Activated B cell treated with CpG ODN at 0.5 μM for 24 hours (primary cell): ENCODE measurements at regions of chr5 and their contacts with region 1.

Region 1: GRCh38 chr5:109688971-109689739 is 572 bp upstream of the MAN2A1 start:
- DNase-seq: peak; percentile 83
- ATAC-seq: peak; percentile 82
- H3K4me3 Mint-ChIP-seq: peak overlapping the region; percentile 88
- H3K27ac Mint-ChIP-seq: peak overlapping the region; percentile 96
- H3K4me1 Mint-ChIP-seq: peaks cover 37% of the 10 kb centered on the region
- H3K27me3 Mint-ChIP-seq: peaks cover 4% of the 10 kb centered on the region
- CTCF ChIP-seq: no peak

Region 2: DNA sequence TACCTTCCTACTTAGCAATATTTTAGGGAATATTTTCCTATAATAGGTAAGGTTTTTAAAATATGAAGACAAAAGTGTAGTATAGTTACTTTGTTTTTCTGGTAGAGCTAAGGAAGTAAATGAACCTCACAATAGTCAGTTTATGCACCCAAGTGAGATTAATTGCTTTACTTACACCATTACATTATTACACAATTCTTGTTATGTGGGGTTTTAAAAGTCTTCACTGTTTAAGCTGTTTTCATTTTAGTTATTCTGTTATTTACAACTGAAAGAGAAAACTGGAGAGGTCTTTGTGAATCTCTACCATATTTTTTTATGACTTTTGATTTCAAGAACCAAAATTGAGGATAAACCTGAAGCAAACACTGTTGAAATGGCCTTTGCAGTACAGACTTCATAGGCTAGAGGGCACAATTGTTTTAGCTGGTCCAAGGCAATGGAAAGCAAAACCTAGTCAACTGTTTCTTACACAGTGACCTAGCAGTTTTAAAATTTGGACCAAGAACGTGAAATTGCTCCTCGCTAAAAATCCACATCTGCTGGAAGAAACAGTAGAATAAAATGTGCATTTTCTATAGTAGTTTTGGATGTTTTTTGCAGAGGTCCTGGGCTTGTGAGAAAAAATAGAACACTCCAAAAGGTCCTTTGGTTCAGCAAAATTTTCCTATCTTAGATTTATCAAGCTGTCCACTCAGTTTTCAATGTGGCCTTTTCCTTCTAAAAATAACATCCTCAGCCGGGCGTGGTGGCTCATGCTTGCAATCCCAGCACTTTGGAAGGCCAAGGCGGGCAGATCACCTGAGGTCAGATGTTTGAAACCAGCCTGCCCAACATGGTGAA is 1007.9 kb before region 1 on chr5:
- CTCF ChIA-PET with region 1: no interaction called
- POLR2A ChIA-PET with region 1: no interaction called
- intact Hi-C with region 1: loop called (anchors 1 kb)
- DNase-seq: no peak
- ATAC-seq: peak; percentile 93
- H3K4me3 Mint-ChIP-seq: peak overlapping the region; percentile 29
- H3K27ac Mint-ChIP-seq: no peak overlapping the region
- H3K4me1 Mint-ChIP-seq: peaks cover 13% of the 10 kb centered on the region
- H3K27me3 Mint-ChIP-seq: peaks cover 1% of the 10 kb centered on the region
- CTCF ChIP-seq: no peak

Region 3: GRCh38 chr5:108919591-108920326 is 769.4 kb before region 1 on chr5:
- CTCF ChIA-PET with region 1: no interaction called
- POLR2A ChIA-PET with region 1: no interaction called
- intact Hi-C with region 1: loop called (anchors 10 kb)
- DNase-seq: no peak
- ATAC-seq: no peak
- H3K4me3 Mint-ChIP-seq: no peak overlapping the region
- H3K27ac Mint-ChIP-seq: no peak overlapping the region
- H3K4me1 Mint-ChIP-seq: peaks cover 4% of the 10 kb centered on the region
- H3K27me3 Mint-ChIP-seq: no peaks in the 10 kb centered on the region
- CTCF ChIP-seq: no peak

Region 4: GRCh38 chr5:109619606-109620005 is 69.5 kb before region 1 on chr5:
- CTCF ChIA-PET with region 1: no interaction called
- POLR2A ChIA-PET with region 1: no interaction called
- intact Hi-C with region 1: no loop called
- DNase-seq: no peak
- ATAC-seq: no peak
- H3K4me3 Mint-ChIP-seq: no peak overlapping the region
- H3K27ac Mint-ChIP-seq: no peak overlapping the region
- H3K4me1 Mint-ChIP-seq: no peaks in the 10 kb centered on the region
- H3K27me3 Mint-ChIP-seq: no peaks in the 10 kb centered on the region
- CTCF ChIP-seq: no peak

Region 5: DNA sequence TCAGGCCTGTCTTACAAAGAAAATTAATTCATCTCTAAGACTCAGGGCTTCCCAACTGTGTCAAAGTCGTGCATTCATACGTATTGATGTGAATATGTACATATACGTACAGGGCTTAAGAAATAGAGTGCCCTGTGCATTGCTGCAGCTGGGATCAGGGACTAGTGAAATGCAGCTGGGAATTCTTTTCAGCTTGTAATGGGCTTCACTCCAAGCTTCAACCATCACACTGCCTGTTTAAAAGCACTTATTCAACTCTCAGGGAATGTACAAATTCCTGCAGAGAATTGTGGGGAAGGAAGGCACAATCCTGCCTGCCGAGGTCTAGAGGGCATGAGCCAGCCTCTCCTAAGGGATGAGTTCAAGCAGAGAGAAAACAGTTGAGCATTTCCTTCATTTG is 59.1 kb before region 1 on chr5:
- CTCF ChIA-PET with region 1: no interaction called
- POLR2A ChIA-PET with region 1: no interaction called
- intact Hi-C with region 1: no loop called
- DNase-seq: no peak
- ATAC-seq: no peak
- H3K4me3 Mint-ChIP-seq: no peak overlapping the region
- H3K27ac Mint-ChIP-seq: no peak overlapping the region
- H3K4me1 Mint-ChIP-seq: no peaks in the 10 kb centered on the region
- H3K27me3 Mint-ChIP-seq: peaks cover 17% of the 10 kb centered on the region
- CTCF ChIP-seq: no peak

Region 6: GRCh38 chr5:109701781-109702180 is 12.6 kb after region 1 on chr5:
- CTCF ChIA-PET with region 1: interaction called, 10 read pairs
- POLR2A ChIA-PET with region 1: interaction called, 4 read pairs
- intact Hi-C with region 1: loop called (anchors 1 kb)
- DNase-seq: no peak
- ATAC-seq: no peak
- H3K4me3 Mint-ChIP-seq: no peak overlapping the region
- H3K27ac Mint-ChIP-seq: no peak overlapping the region
- H3K4me1 Mint-ChIP-seq: peaks cover 75% of the 10 kb centered on the region
- H3K27me3 Mint-ChIP-seq: no peaks in the 10 kb centered on the region
- CTCF ChIP-seq: no peak

Region 7: GRCh38 chr5:109779036-109779735 is 90.0 kb after region 1 on chr5:
- CTCF ChIA-PET with region 1: no interaction called
- POLR2A ChIA-PET with region 1: no interaction called
- intact Hi-C with region 1: loop called (anchors 5 kb)
- DNase-seq: no peak
- ATAC-seq: no peak
- H3K4me3 Mint-ChIP-seq: no peak overlapping the region
- H3K27ac Mint-ChIP-seq: no peak overlapping the region
- H3K4me1 Mint-ChIP-seq: no peaks in the 10 kb centered on the region
- H3K27me3 Mint-ChIP-seq: no peaks in the 10 kb centered on the region
- CTCF ChIP-seq: no peak

Region 8: DNA sequence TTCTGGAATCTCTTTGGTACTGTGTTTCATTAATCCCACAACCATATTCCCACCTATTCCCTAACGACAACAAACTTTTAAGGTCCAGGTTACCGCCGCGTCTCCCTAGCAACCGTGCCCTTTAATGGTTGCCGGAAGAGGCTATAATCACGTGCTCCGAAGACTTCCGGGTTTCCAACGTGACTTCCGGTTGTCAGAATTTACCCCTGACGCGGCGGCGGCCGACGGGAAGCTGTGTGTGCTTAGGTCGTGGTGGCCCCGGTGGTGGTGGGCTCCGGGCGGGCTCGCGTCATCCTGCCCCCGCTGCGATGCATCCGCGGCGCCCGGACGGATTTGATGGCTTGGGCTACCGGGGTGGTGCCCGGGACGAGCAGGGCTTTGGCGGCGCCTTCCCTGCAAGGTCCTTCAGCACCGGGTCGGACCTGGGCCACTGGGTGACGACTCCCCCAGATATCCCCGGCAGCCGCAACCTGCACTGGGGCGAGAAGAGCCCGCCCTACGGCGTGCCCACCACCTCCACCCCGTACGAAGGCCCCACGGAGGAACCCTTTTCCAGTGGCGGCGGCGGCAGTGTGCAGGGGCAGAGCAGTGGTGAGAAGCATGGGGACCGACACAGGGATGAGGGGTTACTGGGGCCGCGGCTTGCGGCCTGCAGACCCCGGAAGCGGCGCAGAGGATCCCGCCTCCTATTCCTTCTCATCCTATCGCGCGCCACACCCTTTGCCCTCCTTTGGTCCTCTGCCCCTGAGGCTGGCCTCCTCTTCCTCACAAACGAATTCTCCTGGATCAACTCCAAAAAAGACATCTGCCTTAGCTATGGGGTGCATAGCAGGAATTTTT is 1049.9 kb after region 1 on chr5 and contains the start of gene SLC25A46:
- CTCF ChIA-PET with region 1: no interaction called
- POLR2A ChIA-PET with region 1: interaction called, 6 read pairs
- intact Hi-C with region 1: loop called (anchors 1 kb)
- DNase-seq: peak; percentile 79
- ATAC-seq: peak; percentile 82
- H3K4me3 Mint-ChIP-seq: peak within 1 kb of the TSS; percentile 97
- H3K27ac Mint-ChIP-seq: peak within 1 kb of the TSS; percentile 96
- H3K4me1 Mint-ChIP-seq: peaks cover 21% of the 10 kb centered on the region
- H3K27me3 Mint-ChIP-seq: peaks cover 3% of the 10 kb centered on the region
- CTCF ChIP-seq: no peak
- total RNA-seq, gene SLC25A46: 39.9 and 42.2 TPM in 2 replicates